Activated T-helper 1 cell treated with anti-CD3 and anti-CD28 coated beads, Interleukin-12 subunit alpha, Interleukin-12 subunit beta, Interleukin-2, Interleukin-4 antibody, amounts not matched to agents 30 ng/mL and 10 ng/mL and 1 ng/mL, durations not matched to agents 14 hours and 24 hours and 36 hours (primary cell): ENCODE measurements at regions of chr14 and their contacts with region 1.

Region 1: GRCh38 chr14:24431569-24432258 is 2.0 kb downstream of the KHNYN start:
- DNase-seq: peak; percentile 85
- H3K4me3 Mint-ChIP-seq: peak overlapping the region; percentile 90
- H3K27ac Mint-ChIP-seq: peak overlapping the region; percentile 95
- H3K4me1 Mint-ChIP-seq: peaks cover 51% of the 10 kb centered on the region
- H3K27me3 Mint-ChIP-seq: no peaks in the 10 kb centered on the region

Region 2: DNA sequence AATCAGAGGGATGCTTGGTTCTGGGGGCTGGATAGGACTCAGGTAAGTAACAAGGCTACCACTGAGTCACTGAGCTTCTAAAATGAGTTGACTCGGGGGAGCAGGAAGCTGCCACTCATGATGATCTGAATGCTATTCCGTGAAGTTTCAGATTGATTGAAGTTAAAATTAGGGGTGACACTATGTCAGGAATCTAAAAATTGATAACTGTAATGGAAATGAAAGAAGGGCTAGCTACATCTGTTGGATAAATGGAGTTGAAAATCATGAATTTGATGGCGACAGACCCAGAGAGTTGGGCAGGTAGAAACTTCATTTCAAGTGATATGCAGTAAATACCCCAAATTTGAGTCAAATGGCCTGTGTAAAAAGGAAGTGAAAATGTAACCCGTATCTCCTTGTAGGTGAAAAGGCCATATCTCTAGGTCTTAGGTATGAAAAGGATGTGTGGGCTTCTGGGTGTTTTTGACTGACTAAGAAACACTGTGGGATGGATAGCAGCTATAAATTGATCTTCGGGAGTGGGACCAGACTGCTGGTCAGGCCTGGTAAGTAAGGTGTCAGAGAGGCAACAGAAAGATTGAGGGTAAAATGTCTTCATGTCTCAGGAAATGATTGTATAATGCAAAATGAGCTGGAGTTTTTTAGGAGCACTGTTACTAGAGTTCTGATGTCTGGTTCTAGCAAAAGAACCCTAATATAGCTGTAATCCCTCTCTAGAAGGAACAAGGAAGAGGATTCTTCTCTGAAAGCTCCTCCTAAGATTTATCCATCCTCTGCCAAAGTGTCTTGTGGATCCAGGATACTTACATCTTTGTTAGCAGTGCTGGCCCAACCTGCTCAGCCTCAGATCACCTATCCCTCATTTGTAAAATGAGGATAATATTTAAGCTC is 1900.0 kb before region 1 on chr14:
- intact Hi-C with region 1: loop called (anchors 5 kb)
- DNase-seq: no peak
- H3K4me3 Mint-ChIP-seq: peak overlapping the region; percentile 80
- H3K27ac Mint-ChIP-seq: peak overlapping the region; percentile 95
- H3K4me1 Mint-ChIP-seq: peaks cover 90% of the 10 kb centered on the region
- H3K27me3 Mint-ChIP-seq: no peaks in the 10 kb centered on the region

Region 3: GRCh38 chr14:24271134-24271833 is 160.4 kb before region 1 on chr14 and contains the start of gene RABGGTA:
- intact Hi-C with region 1: loop called (anchors 1 kb)
- DNase-seq: peak; percentile 87
- H3K4me3 Mint-ChIP-seq: peak within 1 kb of the TSS; percentile 93
- H3K27ac Mint-ChIP-seq: peak within 1 kb of the TSS; percentile 96
- H3K4me1 Mint-ChIP-seq: peaks cover 52% of the 10 kb centered on the region
- H3K27me3 Mint-ChIP-seq: no peaks in the 10 kb centered on the region
- total RNA-seq, gene RABGGTA: 52.2 and 54.4 TPM in 2 replicates

Region 4: DNA sequence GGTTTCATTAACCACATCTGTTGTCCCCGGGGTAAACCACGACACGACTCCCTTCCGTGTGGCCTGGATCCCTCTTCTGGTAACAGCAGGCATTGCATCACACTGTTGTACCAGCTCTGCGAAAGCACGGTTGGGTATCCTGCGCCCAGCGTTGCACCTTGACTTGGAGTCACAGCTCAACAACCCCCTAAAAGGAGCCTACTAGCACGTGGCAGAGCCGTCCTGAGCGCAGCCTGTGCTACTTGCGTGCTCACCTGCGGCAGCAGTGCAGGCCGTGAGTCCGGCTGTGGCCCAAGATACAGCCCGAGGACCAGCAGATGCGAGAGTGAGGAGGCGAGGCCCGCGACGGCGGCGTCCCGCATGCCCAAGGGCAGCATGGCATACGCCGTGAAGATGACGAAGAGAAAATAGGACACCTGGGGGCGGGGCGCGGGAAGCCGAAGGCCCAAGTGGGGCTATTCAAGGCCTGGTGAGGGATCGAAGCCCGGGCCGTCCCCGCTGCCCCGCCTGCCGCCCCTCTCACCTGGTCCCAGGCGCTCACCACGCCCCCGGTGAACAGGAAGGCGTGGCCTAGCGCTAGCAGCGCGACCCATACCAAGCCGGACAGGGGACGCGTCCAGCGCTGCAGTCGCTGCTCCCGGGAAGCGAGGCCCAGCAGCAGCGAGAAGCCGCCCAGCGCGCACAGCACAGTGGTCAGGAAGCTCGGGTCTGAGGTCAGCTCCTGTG is 99.3 kb before region 1 on chr14:
- intact Hi-C with region 1: loop called (anchors 1 kb)
- DNase-seq: peak; percentile 79
- H3K4me3 Mint-ChIP-seq: peak overlapping the region; percentile 80
- H3K27ac Mint-ChIP-seq: peak overlapping the region; percentile 27
- H3K4me1 Mint-ChIP-seq: peaks cover 58% of the 10 kb centered on the region
- H3K27me3 Mint-ChIP-seq: peaks cover 29% of the 10 kb centered on the region

Region 5: GRCh38 chr14:24398653-24399446 is 32.9 kb before region 1 on chr14 and contains the start of gene NYNRIN:
- intact Hi-C with region 1: loop called (anchors 2 kb)
- DNase-seq: peak; percentile 5
- H3K4me3 Mint-ChIP-seq: peak within 1 kb of the TSS; percentile 8
- H3K27ac Mint-ChIP-seq: no peak within 1 kb of the TSS
- H3K4me1 Mint-ChIP-seq: no peaks in the 10 kb centered on the region
- H3K27me3 Mint-ChIP-seq: peaks cover 24% of the 10 kb centered on the region
- total RNA-seq, gene NYNRIN: 0.02 TPM in 1 of 2 replicates, not detected in the other